ENCODE measurements at regions of chr19 and their contacts with region 1.

Region 1: DNA sequence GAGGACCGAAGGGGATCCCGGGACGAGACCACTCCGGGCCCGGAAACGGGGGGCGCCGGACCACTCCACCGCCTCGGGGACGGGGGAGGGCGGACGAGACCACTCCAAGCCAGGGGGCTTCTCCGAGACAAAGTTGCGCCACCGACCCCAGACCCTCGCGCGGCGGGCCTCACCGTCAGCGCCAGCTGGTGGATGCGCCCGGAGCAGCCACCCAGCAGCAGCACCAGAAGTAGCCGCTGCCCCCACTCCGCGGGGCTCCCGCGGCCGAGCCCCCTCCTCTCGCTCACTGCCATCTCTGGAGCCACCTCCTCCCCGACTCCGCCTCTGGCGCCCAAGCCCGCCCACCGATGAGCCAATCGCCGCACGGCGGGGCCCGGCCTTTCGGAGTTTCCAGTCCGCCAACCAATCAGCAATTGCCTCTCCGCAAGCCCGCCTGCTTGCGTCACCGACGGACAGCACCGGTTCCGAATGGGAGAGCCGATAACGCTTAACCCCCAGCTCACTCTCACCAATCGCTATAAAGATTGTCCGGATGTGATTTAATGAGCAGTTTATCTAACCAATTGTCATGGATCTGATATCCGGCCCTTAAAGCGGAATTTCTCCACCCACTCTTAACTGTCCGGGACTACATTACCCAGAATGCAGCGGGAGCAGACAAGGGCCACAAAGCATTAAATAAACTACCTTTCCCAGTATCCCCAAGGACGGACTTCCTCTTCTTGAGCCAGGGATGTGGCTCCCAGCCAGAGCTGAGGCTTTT is at the start of gene GPR108:
- DNase-seq: peak; percentile 99 to 100
- H3K4me3 ChIP-seq: peak within 1 kb of the TSS; percentile 72 to 87
- H3K27ac ChIP-seq: peak within 1 kb of the TSS; percentile 86 to 97
- H3K4me1 ChIP-seq: peaks cover 3 to 30% of the 10 kb centered on the region in 2 donors
- H3K27me3 ChIP-seq: no peaks in the 10 kb centered on the region
- CTCF ChIP-seq: no peak
- total RNA-seq, gene GPR108: 57.6 TPM

Region 2: GRCh38 chr19:6273701-6274601 is 463.5 kb before region 1 on chr19:
- intact Hi-C with region 1: loop called (anchors 5 kb)
- DNase-seq: peak; percentile 79 to 98
- H3K4me3 ChIP-seq: peak overlapping the region; percentile 31 to 45
- H3K27ac ChIP-seq: peak overlapping the region; percentile 90 to 92
- H3K4me1 ChIP-seq: peaks cover 30 to 69% of the 10 kb centered on the region in 2 donors
- H3K27me3 ChIP-seq: no peaks in the 10 kb centered on the region
- CTCF ChIP-seq: no peak

Region 3: GRCh38 chr19:6460101-6460853 is 277.2 kb before region 1 on chr19:
- intact Hi-C with region 1: loop called (anchors 2 kb)
- DNase-seq: peak; percentile 84 to 98
- H3K4me3 ChIP-seq: peak overlapping the region; percentile 72 to 79
- H3K27ac ChIP-seq: peak overlapping the region in 1 of 2 donors; percentile 59
- H3K4me1 ChIP-seq: peaks cover 0 to 4% of the 10 kb centered on the region in 2 donors
- H3K27me3 ChIP-seq: no peaks in the 10 kb centered on the region
- CTCF ChIP-seq: peak; percentile 59 to 73 (median 63)

Region 4: DNA sequence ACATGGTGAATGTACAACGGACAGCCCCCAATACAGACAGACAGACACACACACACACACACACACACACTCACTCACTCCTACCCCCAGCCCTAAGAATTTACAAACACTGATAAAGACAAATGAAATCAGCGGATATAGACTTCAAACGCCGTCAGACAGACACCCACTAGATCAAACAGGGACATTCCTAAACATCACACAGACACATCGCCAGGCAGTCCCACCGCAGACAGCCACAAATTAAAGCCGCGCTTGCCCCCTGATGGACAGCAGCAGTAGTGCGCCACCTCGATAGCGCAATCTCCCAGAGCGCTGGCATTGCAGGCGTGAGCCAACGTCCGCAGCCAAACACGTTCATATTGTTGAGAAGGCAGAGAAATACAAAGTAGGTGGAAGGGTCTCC is 125.2 kb after region 1 on chr19:
- intact Hi-C with region 1: loop called (anchors 1 kb)
- DNase-seq: peak; percentile 46 to 89
- H3K4me3 ChIP-seq: peak overlapping the region; percentile 24 to 59
- H3K27ac ChIP-seq: no peak overlapping the region
- H3K4me1 ChIP-seq: no peaks in the 10 kb centered on the region
- H3K27me3 ChIP-seq: no peaks in the 10 kb centered on the region
- CTCF ChIP-seq: peak; percentile 64 to 80 (median 76)

Region 5: DNA sequence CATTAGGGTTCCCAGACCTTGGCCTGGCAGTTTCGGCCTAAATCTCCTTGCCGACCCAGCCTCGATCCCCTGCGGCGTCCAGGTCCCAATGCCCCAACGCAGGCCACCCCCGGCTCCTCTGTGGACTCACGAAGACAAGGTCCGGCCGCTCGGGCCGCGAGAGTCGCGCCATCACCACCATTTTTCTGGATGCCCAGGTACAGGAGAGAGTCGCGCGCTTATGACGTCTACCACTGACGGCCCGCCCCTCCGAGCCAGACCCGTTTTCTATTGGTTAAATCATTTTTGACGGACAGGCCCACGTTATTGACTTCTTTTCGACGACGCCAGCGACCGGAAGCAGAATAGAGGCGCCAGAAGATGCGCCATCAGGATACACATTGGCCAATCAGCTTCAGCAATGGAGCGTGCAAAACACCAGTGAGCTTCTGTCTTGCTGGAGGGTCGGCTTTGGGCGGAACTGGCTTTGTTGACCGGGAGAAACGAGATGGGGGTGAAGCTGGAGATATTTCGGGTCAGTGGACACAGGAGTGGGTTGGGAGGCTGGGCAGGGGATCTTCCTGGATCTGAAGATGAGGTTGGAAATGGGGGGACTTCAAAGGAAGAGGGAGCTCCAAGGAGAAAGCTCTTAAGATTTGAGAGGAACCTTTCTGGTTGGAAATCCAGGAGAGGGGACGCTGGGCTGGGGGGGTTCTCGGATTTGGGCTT is 892.0 kb after region 1 on chr19 and contains the starts of genes PET100 and XAB2:
- intact Hi-C with region 1: loop called (anchors 2 kb)
- DNase-seq: peak; percentile 95 to 99
- H3K4me3 ChIP-seq: peak within 1 kb of the TSS; percentile 94 to 96
- H3K27ac ChIP-seq: peak within 1 kb of the TSS; percentile 79 to 88
- H3K4me1 ChIP-seq: peaks cover 7 to 27% of the 10 kb centered on the region in 2 donors
- H3K27me3 ChIP-seq: no peaks in the 10 kb centered on the region
- CTCF ChIP-seq: no peak
- total RNA-seq, gene PET100: not detected
- total RNA-seq, gene XAB2: 18.4 TPM

Measured in ascending aorta (tissue), 2 donors.